Stomach (tissue), 19 donors: ENCODE measurements at regions of chr21 and their contacts with region 1.

Region 1: GRCh38 chr21:43733529-43734071 is 14.7 kb downstream of the PDXK start:
- DNase-seq: no peak
- H3K4me3 ChIP-seq: peak overlapping the region in 1 of 4 donors; percentile 10
- H3K27ac ChIP-seq: peak overlapping the region; percentile 59 to 82 (median 68)
- H3K4me1 ChIP-seq: peaks cover 30 to 75% (median 59%) of the 10 kb centered on the region in 4 donors
- H3K27me3 ChIP-seq: no peaks in the 10 kb centered on the region
- CTCF ChIP-seq: no peak
- EP300 ChIP-seq: no peak
- POLR2A ChIP-seq: no peak

Region 2: DNA sequence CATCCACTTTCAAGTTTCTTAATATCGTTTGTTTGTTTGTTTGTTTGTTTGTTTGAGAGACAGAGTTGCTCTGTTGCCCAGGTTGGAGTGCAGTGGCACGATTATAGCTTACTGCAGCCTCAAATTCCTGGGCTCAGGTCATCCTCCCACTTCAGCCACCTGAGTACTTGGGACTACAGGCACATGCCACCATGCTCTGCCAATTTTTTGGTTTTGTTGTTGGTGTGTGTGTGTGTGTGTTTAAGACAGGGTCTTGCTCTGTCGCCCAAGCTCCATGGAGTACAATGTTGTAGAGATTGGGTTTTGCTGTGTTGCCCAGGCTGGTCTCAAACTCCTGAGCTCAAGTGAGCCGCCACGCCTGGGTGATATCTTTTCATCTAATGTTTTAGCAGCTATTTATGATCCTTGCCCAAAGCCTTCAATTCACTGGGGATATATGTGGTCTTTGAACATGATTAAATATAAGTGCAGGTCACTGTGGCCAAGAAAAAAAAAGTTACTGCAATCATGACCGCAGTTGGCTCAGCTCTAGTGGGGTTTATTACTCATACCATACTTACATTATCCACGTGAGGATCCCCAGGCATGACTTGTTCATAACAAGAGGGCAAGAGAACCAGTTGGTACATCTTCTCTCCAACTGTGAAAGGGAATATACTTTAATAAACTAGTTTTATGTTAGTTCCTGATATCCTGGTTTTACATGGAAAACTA is 66.3 kb before region 1 on chr21:
- intact Hi-C with region 1: no loop called
- DNase-seq: no peak
- H3K4me3 ChIP-seq: no peak overlapping the region
- H3K27ac ChIP-seq: no peak overlapping the region
- H3K4me1 ChIP-seq: peaks cover 0 to 16% (median 0%) of the 10 kb centered on the region in 4 donors
- H3K27me3 ChIP-seq: no peaks in the 10 kb centered on the region
- CTCF ChIP-seq: no peak
- EP300 ChIP-seq: no peak
- POLR2A ChIP-seq: no peak

Region 3: DNA sequence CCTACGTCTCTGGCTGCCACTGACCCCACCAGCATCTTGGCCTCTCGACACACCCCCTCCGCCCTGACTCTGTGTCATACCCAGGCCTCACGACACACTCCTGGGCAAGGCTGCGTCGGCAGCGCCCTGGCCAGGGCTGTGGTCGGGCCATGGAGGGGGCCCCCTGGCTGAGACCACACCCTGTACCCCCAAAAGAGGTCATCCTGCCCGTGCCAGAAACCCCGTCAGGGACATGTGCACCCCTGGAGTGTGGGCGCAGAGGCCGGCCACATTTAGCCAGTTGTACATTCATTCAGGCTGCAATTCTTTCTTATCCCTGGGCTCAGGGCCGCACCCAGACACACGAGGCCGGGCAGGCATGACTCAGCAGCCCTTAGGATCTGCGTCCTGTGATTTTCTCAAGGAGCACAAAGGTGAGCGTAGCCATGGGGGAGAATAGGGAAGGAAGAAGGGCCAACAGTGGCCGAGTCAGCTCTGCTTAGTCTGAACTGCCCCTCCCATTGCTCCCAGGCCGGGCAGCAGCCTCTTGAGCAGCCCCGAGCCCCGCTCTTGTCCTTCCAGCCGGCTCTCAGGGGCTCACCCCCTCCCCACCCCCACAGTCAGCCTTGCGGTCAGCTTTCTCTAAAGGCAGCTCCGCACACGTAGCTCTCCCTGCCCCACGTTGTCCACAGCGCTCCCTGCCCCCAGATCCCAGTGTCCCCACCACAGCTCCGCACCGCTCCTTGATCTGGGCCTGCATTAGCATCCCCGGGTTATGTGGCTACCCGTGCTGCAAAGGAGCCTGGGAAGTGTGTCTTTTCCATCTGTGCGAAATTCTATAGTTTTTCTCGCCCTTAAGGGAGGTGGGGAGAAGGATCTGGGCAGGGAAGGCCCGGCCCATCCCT is 34.6 kb after region 1 on chr21:
- intact Hi-C with region 1: loop called (anchors 5 kb)
- DNase-seq: peak; percentile 74 to 92
- H3K4me3 ChIP-seq: no peak overlapping the region
- H3K27ac ChIP-seq: peak overlapping the region; percentile 64 to 81 (median 73)
- H3K4me1 ChIP-seq: peaks cover 11 to 29% (median 22%) of the 10 kb centered on the region in 4 donors
- H3K27me3 ChIP-seq: no peaks in the 10 kb centered on the region
- CTCF ChIP-seq: no peak
- EP300 ChIP-seq: no peak
- POLR2A ChIP-seq: no peak

Region 4: DNA sequence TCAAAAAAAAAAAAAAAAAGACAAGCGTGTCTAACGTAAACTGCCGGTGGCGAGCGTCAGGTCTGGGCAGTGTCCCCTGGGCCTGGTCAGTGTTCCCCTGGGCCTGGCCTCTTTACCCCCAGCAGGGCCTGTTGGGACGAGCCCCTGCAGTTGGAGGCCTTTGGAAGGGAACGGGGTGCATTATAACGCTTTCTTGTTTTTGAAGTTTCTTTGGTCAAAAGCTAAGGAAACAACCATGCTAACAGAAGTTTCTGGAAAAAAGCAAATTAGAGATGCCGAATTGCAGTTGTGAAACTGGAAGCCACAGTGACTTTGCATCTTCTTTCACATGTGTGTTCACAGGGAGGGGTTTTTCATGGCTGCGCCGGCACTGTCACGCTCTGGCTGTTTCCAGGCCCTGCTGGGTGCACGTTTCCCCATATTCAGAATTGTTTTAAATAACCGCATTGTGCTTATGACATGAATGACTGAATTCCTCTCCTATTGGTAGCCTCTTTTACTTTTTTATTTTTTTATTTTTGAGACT is 71.7 kb after region 1 on chr21:
- intact Hi-C with region 1: no loop called
- DNase-seq: peak in 1 of 2 donors; percentile 42
- H3K4me3 ChIP-seq: no peak overlapping the region
- H3K27ac ChIP-seq: peak overlapping the region in 1 of 5 donors; percentile 53
- H3K4me1 ChIP-seq: peaks cover 0 to 3% (median under 1%) of the 10 kb centered on the region in 4 donors
- H3K27me3 ChIP-seq: no peaks in the 10 kb centered on the region
- CTCF ChIP-seq: no peak
- EP300 ChIP-seq: no peak
- POLR2A ChIP-seq: no peak